ENCODE measurements at regions of chr12 and their contacts with region 1.

Region 1: DNA sequence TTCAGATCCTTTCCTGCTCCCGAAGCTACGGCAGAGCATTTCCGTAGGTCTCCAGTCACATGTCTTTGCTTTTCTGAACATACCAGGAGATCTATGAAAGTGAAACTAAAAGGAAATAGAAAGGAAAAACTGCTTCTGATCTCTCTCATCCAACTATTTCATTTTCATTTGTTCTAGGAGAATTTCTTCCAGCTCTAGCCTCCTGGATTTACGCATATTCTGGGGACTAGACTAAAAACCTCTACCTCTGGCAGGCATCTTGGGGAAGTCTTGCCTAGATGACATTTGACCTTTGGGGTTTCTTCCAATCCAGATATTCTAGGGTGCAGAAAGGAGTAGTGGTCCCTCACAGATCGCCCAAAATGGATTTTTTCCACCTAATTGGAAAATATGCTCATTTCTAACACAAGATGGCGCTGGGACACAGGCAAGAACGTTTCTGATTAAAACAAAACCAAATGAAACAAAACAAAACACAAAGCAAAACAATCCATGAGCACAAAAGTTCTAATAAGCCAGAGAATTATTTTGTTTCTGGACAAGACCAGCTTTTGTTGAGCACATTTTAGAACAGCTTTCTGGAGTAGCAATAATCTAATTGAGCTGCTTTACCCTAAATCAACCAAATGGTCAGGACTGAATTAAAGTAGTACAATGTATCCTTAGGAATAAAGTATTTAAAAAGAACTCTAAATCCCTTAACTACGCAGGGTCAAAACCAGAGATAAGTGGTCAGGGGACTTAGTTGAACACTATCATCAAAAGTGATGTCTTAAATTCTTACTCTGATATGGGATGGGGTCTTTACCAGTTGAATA is 12.3 kb upstream of the PARP11 start:
- DNase-seq: no peak
- ATAC-seq: peak in 1 of 2 donors; percentile 30
- H3K4me3 ChIP-seq: peak overlapping the region in 3 of 4 donors; percentile 11 to 31 (median 17)
- H3K27ac ChIP-seq: peak overlapping the region in 3 of 4 donors; percentile 36 to 43 (median 40)
- H3K4me1 ChIP-seq: peaks cover 0 to 3% of the 10 kb centered on the region in 2 donors
- H3K27me3 ChIP-seq: peaks cover 0 to 11% (median 6%) of the 10 kb centered on the region in 3 donors
- CTCF ChIP-seq: peak; percentile 65 to 80 (median 78)
- POLR2A ChIP-seq: no peak

Region 2: GRCh38 chr12:3704512-3705353 is 180.8 kb before region 1 on chr12:
- in situ Hi-C with region 1: no loop called
- intact Hi-C with region 1: no loop called
- DNase-seq: no peak
- ATAC-seq: peak in 1 of 2 donors; percentile 53
- H3K4me3 ChIP-seq: no peak overlapping the region
- H3K27ac ChIP-seq: peak overlapping the region; percentile 15 to 67 (median 46)
- H3K4me1 ChIP-seq: peaks cover under 1 to 5% of the 10 kb centered on the region in 2 donors
- H3K27me3 ChIP-seq: no peaks in the 10 kb centered on the region
- CTCF ChIP-seq: no peak
- POLR2A ChIP-seq: no peak

Region 3: GRCh38 chr12:4030929-4031702 is 145.6 kb after region 1 on chr12:
- in situ Hi-C with region 1: loop called in 3 of 4 experiments (anchors 5 to 10 kb)
- intact Hi-C with region 1: no loop called
- DNase-seq: peak; percentile 75 to 77
- ATAC-seq: peak; percentile 92 to 96
- H3K4me3 ChIP-seq: peak overlapping the region; percentile 53 to 65 (median 59)
- H3K27ac ChIP-seq: peak overlapping the region; percentile 42 to 65 (median 61)
- H3K4me1 ChIP-seq: peaks cover 0 to 3% of the 10 kb centered on the region in 2 donors
- H3K27me3 ChIP-seq: peaks cover 0 to 6% (median 0%) of the 10 kb centered on the region in 3 donors
- CTCF ChIP-seq: peak in 1 of 5 experiments; percentile 5
- POLR2A ChIP-seq: peak; percentile 46 to 66

Region 4: DNA sequence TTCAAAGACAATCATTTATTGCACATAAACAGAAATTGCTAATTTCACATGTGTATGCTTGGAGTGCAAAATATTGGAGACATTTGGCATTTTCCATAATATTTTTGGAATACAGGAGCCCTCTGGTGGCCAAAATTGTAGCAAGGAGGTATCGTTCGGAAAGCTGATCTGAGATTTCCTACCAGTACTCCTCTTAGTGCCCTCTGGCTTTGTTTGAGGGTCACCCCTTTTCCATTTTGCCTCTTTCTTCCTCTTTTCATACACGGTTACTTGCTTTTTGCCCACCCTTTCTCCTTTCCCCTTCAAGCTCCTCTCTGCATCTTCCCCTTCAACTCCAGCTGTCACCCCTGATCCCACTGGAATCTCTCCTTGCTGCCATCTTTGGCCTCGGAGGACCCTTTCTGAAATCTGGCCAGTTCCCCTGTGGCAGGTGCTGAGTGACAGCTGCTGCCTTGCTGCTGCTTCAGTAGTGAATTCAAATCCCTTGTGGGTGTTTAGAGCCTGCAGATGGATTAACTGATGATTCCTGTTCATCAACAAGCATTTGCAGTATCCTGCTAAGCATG is 152.3 kb after region 1 on chr12:
- in situ Hi-C with region 1: loop called (anchors 5 to 10 kb)
- intact Hi-C with region 1: loop called (anchors 1 kb)
- DNase-seq: peak in 1 of 2 donors; percentile 17
- ATAC-seq: no peak
- H3K4me3 ChIP-seq: no peak overlapping the region
- H3K27ac ChIP-seq: no peak overlapping the region
- H3K4me1 ChIP-seq: no peaks in the 10 kb centered on the region
- H3K27me3 ChIP-seq: peaks cover 0 to 5% (median 0%) of the 10 kb centered on the region in 3 donors
- CTCF ChIP-seq: peak; percentile 16 to 67 (median 51)
- POLR2A ChIP-seq: no peak

Region 5: DNA sequence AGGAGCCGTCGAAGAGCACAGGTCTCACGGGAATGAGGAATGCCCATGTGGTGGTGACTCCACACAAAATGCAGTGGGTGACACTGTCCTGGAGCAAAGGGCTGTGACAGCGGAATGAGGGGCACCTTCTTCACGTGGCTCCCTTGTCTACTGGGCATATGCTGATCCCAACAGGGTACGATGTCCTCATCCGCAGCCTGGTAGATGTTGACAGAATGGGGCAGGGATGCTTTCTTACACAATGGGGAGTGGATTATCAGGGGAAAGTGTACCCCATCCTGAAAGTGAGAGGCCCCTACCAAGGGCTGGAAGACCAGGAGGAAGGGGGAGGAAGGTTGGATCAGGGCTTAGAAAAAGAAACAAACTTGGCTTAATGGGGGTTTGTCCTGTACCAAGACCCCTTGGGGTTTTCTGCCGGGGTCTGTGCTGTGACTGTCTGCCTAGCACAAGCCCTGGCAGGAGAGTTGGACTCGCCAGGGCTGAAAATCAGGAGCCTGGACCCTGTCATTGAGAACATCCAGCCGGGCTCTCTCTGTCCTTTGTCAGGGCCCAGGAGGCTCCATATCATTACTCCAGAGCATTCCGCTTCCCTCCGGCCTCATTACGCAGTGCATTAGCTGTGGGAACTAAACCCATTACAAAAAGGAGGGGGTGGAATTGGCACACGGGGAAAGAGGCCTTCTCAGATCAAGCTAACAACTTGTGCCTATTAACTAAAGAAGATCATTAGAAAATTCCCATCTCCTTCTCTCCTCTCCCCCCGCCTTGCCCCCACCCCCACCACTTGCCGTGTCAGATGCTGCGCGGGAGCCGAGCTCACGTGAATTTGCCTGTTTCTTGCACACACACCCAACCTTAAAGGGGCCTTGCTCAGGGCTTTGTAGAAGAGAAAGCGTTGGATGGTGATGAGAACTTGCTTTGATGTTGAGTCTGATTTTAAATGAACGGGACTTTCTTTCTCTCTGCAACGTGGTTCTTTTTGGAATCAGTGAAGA is 159.5 kb after region 1 on chr12:
- in situ Hi-C with region 1: loop called in 1 of 4 experiments (anchors 5 kb)
- intact Hi-C with region 1: no loop called
- DNase-seq: no peak
- ATAC-seq: no peak
- H3K4me3 ChIP-seq: no peak overlapping the region
- H3K27ac ChIP-seq: no peak overlapping the region
- H3K4me1 ChIP-seq: no peaks in the 10 kb centered on the region
- H3K27me3 ChIP-seq: no peaks in the 10 kb centered on the region
- CTCF ChIP-seq: no peak
- POLR2A ChIP-seq: no peak

Region 6: DNA sequence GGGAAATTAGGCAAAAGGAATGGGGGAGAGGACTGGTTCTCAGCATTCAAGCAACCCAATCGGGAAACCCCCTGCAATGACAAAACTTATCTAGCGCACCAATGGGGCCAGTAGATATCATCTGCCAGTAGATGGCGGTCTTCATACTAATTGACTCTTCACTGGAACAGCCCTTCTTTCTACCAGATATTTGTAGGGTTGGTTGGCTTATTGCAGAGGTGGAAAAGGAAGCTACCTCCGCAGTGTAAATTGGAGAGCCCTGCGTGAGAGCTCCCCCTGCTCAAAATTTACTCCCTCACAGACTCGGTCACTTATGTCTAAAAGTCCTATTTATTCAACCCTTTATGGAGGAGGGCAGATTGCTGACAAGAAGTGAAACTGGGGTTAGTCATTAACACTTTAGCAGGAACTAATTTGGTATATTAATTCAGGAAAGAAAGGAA is 222.0 kb after region 1 on chr12:
- in situ Hi-C with region 1: no loop called
- intact Hi-C with region 1: no loop called
- DNase-seq: no peak
- ATAC-seq: peak in 1 of 2 donors; percentile 42
- H3K4me3 ChIP-seq: no peak overlapping the region
- H3K27ac ChIP-seq: no peak overlapping the region
- H3K4me1 ChIP-seq: no peaks in the 10 kb centered on the region
- H3K27me3 ChIP-seq: peaks cover 2 to 7% (median 4%) of the 10 kb centered on the region in 3 donors
- CTCF ChIP-seq: peak in 2 of 5 experiments; percentile 26 to 38
- POLR2A ChIP-seq: no peak